Spleen (tissue), 13 donors: ENCODE measurements at regions of chr6 and their contacts with region 1.

Region 1: DNA sequence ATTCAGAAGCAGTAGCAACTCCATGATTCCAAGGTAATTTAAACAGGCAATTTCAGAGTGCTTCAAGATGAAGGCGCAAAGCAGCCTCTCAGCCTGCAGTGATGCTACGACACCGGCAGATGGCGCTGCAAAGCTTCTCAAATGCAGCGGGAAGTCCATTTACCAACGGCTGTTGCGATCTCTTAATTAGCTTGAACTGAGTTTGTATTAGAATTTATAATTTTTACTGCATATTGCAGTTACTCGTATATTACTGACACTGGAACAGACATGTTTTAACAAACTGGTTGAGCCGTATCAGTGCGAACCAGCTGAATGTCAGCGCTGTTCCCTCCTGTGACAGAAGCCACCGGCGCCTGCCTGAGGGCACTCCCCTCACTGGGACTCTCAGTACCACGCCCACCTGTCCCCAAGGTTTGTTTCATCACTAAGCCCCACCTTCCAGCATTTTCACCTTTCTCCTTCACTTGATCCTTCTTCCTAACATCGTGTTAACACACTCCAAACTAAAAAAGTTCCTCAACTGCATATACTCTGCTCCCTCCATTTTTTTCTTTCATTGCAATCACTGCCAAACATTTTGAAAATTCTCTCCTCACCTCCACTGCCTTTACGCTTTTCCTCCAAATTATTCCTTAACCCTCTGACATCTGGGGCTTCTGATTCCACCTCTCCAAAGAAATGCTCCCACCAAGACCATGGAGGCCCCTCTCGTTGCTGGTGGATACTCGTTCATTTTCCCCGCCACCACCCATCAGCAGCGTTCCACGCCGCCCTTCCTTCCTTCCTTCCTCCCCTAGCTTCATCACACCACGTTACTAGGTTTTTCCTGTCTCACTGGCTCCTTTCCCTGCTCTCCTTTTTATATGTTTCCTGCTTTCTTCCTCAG is 14.5 kb downstream of the GNL1 start:
- DNase-seq: peak; percentile 94
- H3K4me3 ChIP-seq: peak overlapping the region; percentile 20 to 69 (median 37)
- H3K27ac ChIP-seq: peak overlapping the region; percentile 42 to 83 (median 75)
- H3K4me1 ChIP-seq: peaks cover 24 to 39% (median 31%) of the 10 kb centered on the region in 6 donors
- H3K27me3 ChIP-seq: no peaks in the 10 kb centered on the region
- CTCF ChIP-seq: peak; percentile 93 to 100 (median 99)
- POLR2A ChIP-seq: peak in 1 of 3 donors; percentile 30

Region 2: GRCh38 chr6:30453508-30454116 is 88.1 kb before region 1 on chr6:
- intact Hi-C with region 1: no loop called
- DNase-seq: peak; percentile 96
- H3K4me3 ChIP-seq: peak overlapping the region in 1 of 8 donors; percentile 38
- H3K27ac ChIP-seq: no peak overlapping the region
- H3K4me1 ChIP-seq: peaks cover 18 to 39% (median 36%) of the 10 kb centered on the region in 6 donors
- H3K27me3 ChIP-seq: peaks cover 0 to 97% (median 79%) of the 10 kb centered on the region in 7 donors
- CTCF ChIP-seq: peak; percentile 72 to 92 (median 87)
- POLR2A ChIP-seq: no peak

Region 3: DNA sequence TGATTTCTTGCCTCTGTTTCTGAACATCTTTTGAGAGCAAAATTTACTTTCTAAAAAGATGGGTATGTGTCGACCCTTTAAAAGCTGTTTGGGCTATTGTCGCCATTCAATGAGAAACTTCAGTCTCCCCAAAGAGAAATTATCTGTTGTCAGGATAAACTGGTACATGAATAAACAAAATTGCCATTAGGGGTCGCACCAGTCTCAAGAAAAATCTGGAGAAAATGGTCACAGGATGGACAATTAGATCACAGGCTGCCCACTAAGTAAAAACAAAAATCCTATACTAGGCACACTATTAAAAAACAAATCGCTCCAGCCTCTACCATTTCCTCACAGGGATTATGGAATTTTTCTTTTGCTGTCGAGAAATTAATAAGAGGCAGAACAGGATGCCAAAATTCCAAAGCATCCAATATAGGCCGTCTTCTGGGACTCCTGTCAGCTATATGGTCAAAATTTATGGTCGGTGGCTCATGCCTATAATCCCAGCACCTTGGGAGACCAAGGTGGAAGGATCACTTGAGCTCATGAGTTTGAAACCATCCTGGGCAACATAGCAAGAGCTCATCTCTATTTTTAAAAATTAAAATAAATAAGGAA is 58.0 kb before region 1 on chr6:
- intact Hi-C with region 1: loop called (anchors 5 kb)
- DNase-seq: no peak
- H3K4me3 ChIP-seq: no peak overlapping the region
- H3K27ac ChIP-seq: peak overlapping the region in 3 of 8 donors; percentile 20 to 47 (median 38)
- H3K4me1 ChIP-seq: peaks cover 20 to 46% (median 30%) of the 10 kb centered on the region in 6 donors
- H3K27me3 ChIP-seq: peaks cover 4 to 42% (median 30%) of the 10 kb centered on the region in 7 donors
- CTCF ChIP-seq: peak; percentile 32 to 84 (median 66)
- POLR2A ChIP-seq: no peak

Region 4: DNA sequence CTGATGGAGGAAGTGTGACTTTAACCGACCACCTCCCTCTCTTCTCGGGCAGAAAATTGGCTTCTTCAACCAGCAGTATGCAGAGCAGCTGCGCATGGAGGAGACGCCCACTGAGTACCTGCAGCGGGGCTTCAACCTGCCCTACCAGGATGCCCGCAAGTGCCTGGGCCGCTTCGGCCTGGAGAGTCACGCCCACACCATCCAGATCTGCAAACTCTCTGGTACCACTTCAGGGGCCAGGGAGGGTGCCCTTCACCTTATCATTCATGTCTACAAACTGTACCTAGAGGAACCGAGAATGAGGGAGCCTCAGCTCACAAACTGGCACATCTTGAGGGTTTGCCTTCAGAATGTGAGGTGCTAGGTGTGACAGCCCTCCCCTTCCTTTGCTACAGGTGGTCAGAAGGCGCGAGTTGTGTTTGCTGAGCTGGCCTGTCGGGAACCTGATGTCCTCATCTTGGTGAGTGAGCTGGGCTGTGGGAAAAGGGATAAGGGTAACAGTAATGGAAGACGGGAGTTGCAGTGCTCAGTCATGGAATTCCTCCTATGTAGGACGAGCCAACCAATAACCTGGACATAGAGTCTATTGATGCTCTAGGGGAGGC is 48.1 kb after region 1 on chr6:
- intact Hi-C with region 1: loop called (anchors 5 kb)
- DNase-seq: no peak
- H3K4me3 ChIP-seq: no peak overlapping the region
- H3K27ac ChIP-seq: peak overlapping the region in 1 of 8 donors; percentile 29
- H3K4me1 ChIP-seq: peaks cover 0 to 7% (median 0%) of the 10 kb centered on the region in 6 donors
- H3K27me3 ChIP-seq: no peaks in the 10 kb centered on the region
- CTCF ChIP-seq: no peak
- POLR2A ChIP-seq: no peak

Region 5: DNA sequence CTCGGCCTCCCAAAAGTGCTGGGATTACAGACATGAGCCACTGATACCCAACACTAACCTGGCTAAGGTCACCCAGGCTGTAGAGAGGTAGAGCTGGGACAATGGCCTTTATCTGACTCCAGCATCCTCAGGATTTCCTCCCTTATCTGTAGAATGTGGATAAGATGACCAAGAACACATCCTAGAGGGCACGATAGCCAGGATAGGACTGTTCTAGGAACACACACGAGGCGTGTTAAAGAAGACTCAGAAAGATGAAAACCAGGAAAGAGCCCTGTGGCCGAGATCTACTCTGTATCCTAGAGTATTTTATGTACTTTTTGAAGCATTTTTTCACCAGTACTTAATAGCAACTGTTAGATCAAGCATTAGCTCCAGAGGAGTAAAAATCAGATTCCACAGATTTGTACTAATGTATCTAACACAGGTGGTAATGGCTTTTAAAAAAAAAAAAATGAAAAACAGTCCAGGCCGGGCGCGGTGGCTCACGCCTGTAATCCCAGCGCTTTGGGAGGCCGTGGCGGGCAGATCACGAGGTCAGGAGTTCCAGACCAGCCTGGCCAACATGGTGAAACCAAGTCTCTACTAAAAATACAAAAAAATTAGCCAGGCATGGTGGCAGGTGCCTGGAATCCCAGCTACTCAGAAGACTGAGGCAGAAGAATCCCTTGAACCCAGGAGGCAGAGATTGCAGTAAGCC is 58.0 kb after region 1 on chr6:
- intact Hi-C with region 1: loop called (anchors 5 kb)
- DNase-seq: no peak
- H3K4me3 ChIP-seq: no peak overlapping the region
- H3K27ac ChIP-seq: peak overlapping the region in 1 of 8 donors; percentile 24
- H3K4me1 ChIP-seq: peaks cover 0 to 54% (median 16%) of the 10 kb centered on the region in 6 donors
- H3K27me3 ChIP-seq: no peaks in the 10 kb centered on the region
- CTCF ChIP-seq: no peak
- POLR2A ChIP-seq: no peak

Region 6: GRCh38 chr6:30664994-30665767 is 123.4 kb after region 1 on chr6:
- intact Hi-C with region 1: loop called (anchors 10 kb)
- DNase-seq: no peak
- H3K4me3 ChIP-seq: no peak overlapping the region
- H3K27ac ChIP-seq: no peak overlapping the region
- H3K4me1 ChIP-seq: peaks cover 0 to 14% (median 0%) of the 10 kb centered on the region in 6 donors
- H3K27me3 ChIP-seq: no peaks in the 10 kb centered on the region
- CTCF ChIP-seq: no peak
- POLR2A ChIP-seq: no peak